PC-3 (cell line): ENCODE measurements at regions of chr10 and their contacts with region 1.

Region 1: GRCh38 chr10:90969947-90970684 is 49.2 kb upstream of the ANKRD1 start:
- DNase-seq: peak; percentile 50
- ATAC-seq: peak; percentile 69
- H3K4me3 ChIP-seq: no peak overlapping the region
- H3K27ac ChIP-seq: peak overlapping the region; percentile 90
- H3K4me1 ChIP-seq: peaks cover 23% of the 10 kb centered on the region
- H3K27me3 ChIP-seq: no peaks in the 10 kb centered on the region
- CTCF ChIP-seq: peak; percentile 46

Region 2: GRCh38 chr10:90912174-90912573 is 57.9 kb before region 1 on chr10:
- CTCF ChIA-PET with region 1: interaction called, 22 read pairs
- POLR2A ChIA-PET with region 1: no interaction called
- intact Hi-C with region 1: loop called (anchors 1 kb)
- DNase-seq: no peak
- ATAC-seq: no peak
- H3K4me3 ChIP-seq: no peak overlapping the region
- H3K27ac ChIP-seq: no peak overlapping the region
- H3K4me1 ChIP-seq: peaks cover 6% of the 10 kb centered on the region
- H3K27me3 ChIP-seq: no peaks in the 10 kb centered on the region
- CTCF ChIP-seq: no peak

Region 3: DNA sequence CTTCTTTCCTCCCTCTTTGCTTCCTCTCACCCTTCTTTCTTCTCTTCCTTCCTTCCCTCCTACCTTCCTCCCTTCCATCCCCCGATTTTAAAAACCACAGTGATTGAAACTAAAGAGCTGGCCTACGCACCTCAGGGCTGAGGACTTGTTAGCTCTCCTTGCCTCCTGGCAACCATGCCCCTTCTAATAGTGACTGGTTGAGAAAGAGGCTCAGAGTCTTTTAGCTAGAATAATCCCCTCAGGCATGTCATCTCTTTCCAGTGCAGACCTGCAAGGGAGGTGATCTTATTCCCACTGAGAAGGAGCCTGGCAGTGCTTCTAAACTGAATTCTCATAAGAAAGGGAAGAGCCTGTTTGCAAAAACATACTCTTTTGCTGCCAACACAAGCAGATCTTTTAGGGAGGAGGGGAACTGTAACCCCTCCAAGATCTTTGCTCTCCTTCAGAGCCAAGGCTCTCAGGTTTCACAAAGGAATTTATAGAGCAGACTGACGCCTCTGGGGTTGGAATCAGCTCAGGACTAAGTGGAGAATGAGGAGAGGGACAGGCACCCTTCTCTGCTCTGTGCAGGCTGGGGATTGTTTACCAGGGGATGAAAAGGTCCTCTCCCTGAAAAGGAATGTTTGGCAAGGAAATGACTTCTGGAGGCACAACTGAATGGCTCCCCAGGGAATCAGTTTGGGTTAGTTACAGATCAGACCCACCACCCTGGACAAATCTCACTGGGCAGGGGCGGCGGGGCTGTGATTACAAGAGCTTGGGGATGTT is 39.9 kb before region 1 on chr10:
- CTCF ChIA-PET with region 1: no interaction called
- POLR2A ChIA-PET with region 1: interaction called, 4 read pairs
- intact Hi-C with region 1: loop called (anchors 2 kb)
- DNase-seq: peak; percentile 84
- ATAC-seq: peak; percentile 97
- H3K4me3 ChIP-seq: peak overlapping the region; percentile 40
- H3K27ac ChIP-seq: peak overlapping the region; percentile 70
- H3K4me1 ChIP-seq: peaks cover 35% of the 10 kb centered on the region
- H3K27me3 ChIP-seq: no peaks in the 10 kb centered on the region
- CTCF ChIP-seq: no peak

Region 4: GRCh38 chr10:91006001-91006751 is 36.1 kb after region 1 on chr10:
- CTCF ChIA-PET with region 1: no interaction called
- POLR2A ChIA-PET with region 1: no interaction called
- intact Hi-C with region 1: no loop called
- DNase-seq: peak; percentile 69
- ATAC-seq: peak; percentile 53
- H3K4me3 ChIP-seq: no peak overlapping the region
- H3K27ac ChIP-seq: no peak overlapping the region
- H3K4me1 ChIP-seq: peaks cover 16% of the 10 kb centered on the region
- H3K27me3 ChIP-seq: no peaks in the 10 kb centered on the region
- CTCF ChIP-seq: peak; percentile 89

Region 5: GRCh38 chr10:91034494-91035159 is 64.5 kb after region 1 on chr10:
- CTCF ChIA-PET with region 1: no interaction called
- POLR2A ChIA-PET with region 1: no interaction called
- intact Hi-C with region 1: no loop called
- DNase-seq: peak; percentile 25
- ATAC-seq: peak; percentile 31; the same call in 1 of the 2 replicates
- H3K4me3 ChIP-seq: no peak overlapping the region
- H3K27ac ChIP-seq: no peak overlapping the region
- H3K4me1 ChIP-seq: 0 out of 2 replicates have a peak, but pooled peaks cover 5% of the 10 kb centered on the region
- H3K27me3 ChIP-seq: no peaks in the 10 kb centered on the region
- CTCF ChIP-seq: no peak